A549 (cell line): ENCODE measurements at regions of chr11 and their contacts with region 1.

Region 1: GRCh38 chr11:47233989-47234668 is 14.5 kb downstream of the ACP2 start:
- DNase-seq: peak; percentile 67 to 90
- ATAC-seq: peak; percentile 88 to 90
- H3K4me3 ChIP-seq: peak overlapping the region; percentile 21
- H3K27ac ChIP-seq: peak overlapping the region; percentile 79 to 89
- H3K4me1 ChIP-seq: peaks cover 46% of the 10 kb centered on the region
- CTCF ChIP-seq: peak; percentile 67
- EP300 ChIP-seq: peak; percentile 25 to 58; a peak in 2 of 5 replicates
- POLR2A ChIP-seq: no peak
- RAD21 ChIP-seq: peak; percentile 75 to 78

Region 2: GRCh38 chr11:47248664-47249377 is 14.7 kb after region 1 on chr11 and contains the start of gene ACP2:
- CTCF ChIA-PET with region 1: interaction called, 47 read pairs
- POLR2A ChIA-PET with region 1: interaction called, 34 read pairs
- DNase-seq: peak; percentile 81 to 94
- ATAC-seq: peak; percentile 93 to 96
- H3K4me3 ChIP-seq: peak within 1 kb of the TSS; percentile 74
- H3K27ac ChIP-seq: peak within 1 kb of the TSS; percentile 95
- H3K4me1 ChIP-seq: peaks cover 19% of the 10 kb centered on the region; the same call in 2 of the 3 replicates
- CTCF ChIP-seq: peak; percentile 35
- EP300 ChIP-seq: no peak
- POLR2A ChIP-seq: peak; percentile 83; the same call in 1 of the 2 replicates
- RAD21 ChIP-seq: peak; percentile 31 to 39; a peak in 4 of 5 replicates
- polyA plus RNA-seq, gene ACP2: 13.6 and 17.7 TPM in 2 replicates

Region 3: GRCh38 chr11:47348859-47349258 is 114.7 kb after region 1 on chr11:
- CTCF ChIA-PET with region 1: interaction called, 50 read pairs
- POLR2A ChIA-PET with region 1: no interaction called
- DNase-seq: peak; percentile 50 to 63
- ATAC-seq: peak; percentile 44 to 77; a peak in 3 of 6 replicates
- H3K4me3 ChIP-seq: no peak overlapping the region
- H3K27ac ChIP-seq: no peak overlapping the region
- H3K4me1 ChIP-seq: no peaks in the 10 kb centered on the region
- CTCF ChIP-seq: peak; percentile 33
- EP300 ChIP-seq: no peak
- POLR2A ChIP-seq: no peak
- RAD21 ChIP-seq: peak; percentile 50 to 69; a peak in 4 of 5 replicates